ENCODE measurements at regions of chr1 and their contacts with region 1.

Region 1: GRCh38 chr1:234478481-234479309 is at the start of gene TARBP1:
- DNase-seq: peak; percentile 78
- ATAC-seq: peak; percentile 86
- H3K4me3 ChIP-seq: peak within 1 kb of the TSS; percentile 83
- H3K27ac ChIP-seq: peak within 1 kb of the TSS; percentile 62; the same call in 1 of the 2 replicates
- H3K4me1 ChIP-seq: peaks cover 8% of the 10 kb centered on the region
- H3K27me3 ChIP-seq: 0 out of 2 replicates have a peak, but pooled peaks cover 2% of the 10 kb centered on the region
- CTCF ChIP-seq: peak; percentile 36; the same call in 1 of the 2 replicates
- POLR2A ChIP-seq: 0 out of 2 replicates have a peak, but pooled peaks have one; percentile 26
- RAD21 ChIP-seq: peak; percentile 31
- total RNA-seq, gene TARBP1: 10.6 and 12.8 TPM in 2 replicates

Region 2: DNA sequence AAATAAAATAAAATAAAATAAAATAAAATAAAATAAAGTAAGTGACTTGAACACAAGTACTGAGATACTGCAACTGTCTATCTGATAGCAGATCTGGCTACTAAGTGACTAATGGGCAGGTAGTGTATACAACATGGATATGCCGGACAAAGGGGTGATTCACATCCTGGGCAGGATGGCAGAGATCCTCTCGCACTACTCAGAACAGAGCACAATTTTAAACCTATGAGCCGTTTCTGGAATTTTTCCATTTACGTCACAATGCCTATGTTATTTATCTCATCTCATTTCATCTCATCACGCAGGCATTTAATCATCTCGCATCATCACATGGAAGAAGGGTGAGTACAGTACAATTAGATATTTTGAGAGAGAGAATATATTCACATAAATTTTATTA is 338.7 kb before region 1 on chr1:
- CTCF ChIA-PET with region 1: no interaction called
- POLR2A ChIA-PET with region 1: no interaction called
- dilution Hi-C with region 1: no loop called
- in situ Hi-C with region 1: no loop called
- intact Hi-C with region 1: no loop called
- DNase-seq: peak; percentile 92
- ATAC-seq: peak; percentile 86
- H3K4me3 ChIP-seq: no peak overlapping the region
- H3K27ac ChIP-seq: no peak overlapping the region
- H3K4me1 ChIP-seq: no peaks in the 10 kb centered on the region; the same call in 1 of the 2 replicates
- H3K27me3 ChIP-seq: no peaks in the 10 kb centered on the region
- CTCF ChIP-seq: no peak
- POLR2A ChIP-seq: no peak
- RAD21 ChIP-seq: no peak

Region 3: DNA sequence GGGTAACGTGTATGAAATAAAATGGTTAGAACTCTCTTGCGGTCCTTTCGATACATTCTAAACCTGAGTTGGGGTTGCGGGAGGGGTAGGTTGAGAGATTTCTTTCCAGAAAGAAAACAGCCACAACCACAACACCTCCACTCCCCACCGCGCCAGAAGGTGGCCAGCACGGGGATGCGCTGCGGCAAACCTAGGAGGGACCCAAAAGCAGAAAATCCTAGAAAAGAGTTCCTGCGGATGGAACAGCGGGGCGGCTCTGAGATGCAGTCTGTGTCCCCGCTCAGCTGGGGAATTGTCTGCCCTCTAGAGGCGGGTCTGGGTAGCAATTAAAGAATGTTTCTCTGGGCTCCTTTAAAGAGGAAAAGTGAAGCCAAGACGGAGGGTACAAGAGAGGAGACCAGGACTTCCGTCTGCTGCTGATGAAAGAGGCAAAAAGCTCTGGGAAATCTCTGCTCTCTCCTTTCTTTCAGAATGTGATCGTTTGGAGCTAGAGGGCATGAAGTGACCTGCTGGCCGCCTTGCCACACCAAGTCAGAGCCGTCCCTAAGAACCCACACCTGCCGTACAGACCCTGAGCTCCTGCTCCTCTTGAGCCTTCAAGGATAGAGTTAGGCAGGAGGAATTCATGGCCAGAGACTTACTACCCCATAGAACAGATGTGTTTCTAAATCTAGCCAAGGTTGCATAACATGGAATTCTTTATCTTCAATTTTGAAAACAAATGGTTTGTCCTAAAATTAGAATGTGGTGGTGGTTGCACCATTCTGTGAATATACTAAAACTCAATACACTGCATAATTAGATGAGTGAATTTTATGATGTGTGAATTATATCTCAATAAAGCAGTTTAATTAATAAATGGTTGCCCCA is 152.0 kb before region 1 on chr1:
- CTCF ChIA-PET with region 1: no interaction called
- POLR2A ChIA-PET with region 1: no interaction called
- dilution Hi-C with region 1: no loop called
- in situ Hi-C with region 1: no loop called
- intact Hi-C with region 1: loop called (anchors 5 kb)
- DNase-seq: peak; percentile 43
- ATAC-seq: peak; percentile 92
- H3K4me3 ChIP-seq: peak overlapping the region; percentile 40; the same call in 1 of the 2 replicates
- H3K27ac ChIP-seq: no peak overlapping the region
- H3K4me1 ChIP-seq: peaks cover 3% of the 10 kb centered on the region
- H3K27me3 ChIP-seq: peaks cover 4% of the 10 kb centered on the region
- CTCF ChIP-seq: peak; percentile 72
- POLR2A ChIP-seq: no peak
- RAD21 ChIP-seq: peak; percentile 59

Region 4: DNA sequence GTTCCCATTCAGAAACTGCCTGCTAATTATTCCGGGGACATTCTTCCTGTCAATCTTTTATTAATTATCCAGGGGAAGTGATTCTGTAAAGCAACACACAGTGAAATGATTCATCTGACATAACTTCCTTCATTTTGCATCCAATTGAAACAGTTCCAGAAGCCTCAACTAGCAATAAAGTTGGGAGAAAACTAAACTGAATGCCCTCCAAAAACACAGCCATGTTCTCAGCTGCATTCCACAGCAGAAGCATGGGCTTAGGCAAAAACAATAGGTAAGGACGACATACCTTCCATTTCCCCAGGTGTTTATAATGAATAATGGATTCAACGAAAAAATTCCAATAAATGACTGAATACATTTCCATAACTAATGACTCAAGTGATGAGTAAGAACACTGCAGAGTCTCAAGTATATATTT is 37.1 kb after region 1 on chr1:
- CTCF ChIA-PET with region 1: no interaction called
- POLR2A ChIA-PET with region 1: interaction called, 12 read pairs
- dilution Hi-C with region 1: no loop called
- in situ Hi-C with region 1: no loop called
- intact Hi-C with region 1: no loop called
- DNase-seq: peak; percentile 61
- ATAC-seq: peak; percentile 44; the same call in 1 of the 2 replicates
- H3K4me3 ChIP-seq: no peak overlapping the region
- H3K27ac ChIP-seq: peak overlapping the region; percentile 26; the same call in 1 of the 2 replicates
- H3K4me1 ChIP-seq: peaks cover 9% of the 10 kb centered on the region
- H3K27me3 ChIP-seq: no peaks in the 10 kb centered on the region
- CTCF ChIP-seq: no peak
- POLR2A ChIP-seq: no peak
- RAD21 ChIP-seq: no peak

Region 5: DNA sequence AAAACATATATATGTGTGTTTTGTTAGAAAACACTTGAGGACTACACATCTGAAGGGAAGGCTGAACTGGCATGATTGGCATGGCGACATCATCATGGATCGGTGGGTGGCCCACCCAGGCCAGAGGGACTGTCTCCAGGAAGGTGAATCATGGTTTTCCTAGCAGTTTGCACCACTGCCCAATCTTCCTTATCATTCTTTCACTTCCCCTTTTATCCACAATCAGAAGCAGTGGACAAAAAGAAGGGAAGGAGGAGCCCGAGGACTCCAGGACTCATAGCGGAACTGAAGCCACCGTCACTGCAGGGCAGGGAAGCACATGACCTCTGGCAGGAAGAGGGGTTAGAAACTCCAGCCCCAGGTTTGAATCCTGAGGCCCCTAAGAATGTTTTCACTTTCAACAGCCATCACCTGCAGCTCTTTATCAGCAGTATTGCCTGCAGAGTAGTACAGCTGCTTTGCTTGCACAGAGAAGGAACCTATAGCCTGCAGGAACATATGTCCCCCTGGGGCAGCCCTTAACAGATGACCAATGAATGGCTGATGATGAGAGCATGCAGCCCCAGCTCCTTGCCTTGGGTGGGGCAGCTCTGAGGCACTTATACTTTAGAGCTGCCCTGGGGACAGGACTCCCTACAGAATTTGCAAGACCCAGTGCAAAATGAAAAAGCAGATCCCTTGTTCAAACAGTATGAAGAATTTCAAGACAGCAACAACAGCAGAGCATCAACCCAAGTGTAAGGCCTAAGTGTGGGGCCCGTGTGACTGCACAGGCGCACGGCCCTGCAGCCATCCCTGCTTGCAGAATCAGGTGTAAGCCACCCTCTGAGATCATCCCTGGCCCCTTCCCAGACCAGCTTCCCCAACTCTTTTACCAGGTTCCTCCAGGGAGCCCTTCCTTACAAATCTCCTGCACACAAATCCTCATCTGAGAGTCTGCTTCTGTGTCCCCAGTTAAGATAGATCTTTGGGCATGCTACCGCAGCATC is 373.0 kb after region 1 on chr1:
- CTCF ChIA-PET with region 1: no interaction called
- POLR2A ChIA-PET with region 1: no interaction called
- dilution Hi-C with region 1: no loop called
- in situ Hi-C with region 1: loop called (anchors 25 kb)
- intact Hi-C with region 1: no loop called
- DNase-seq: peak; percentile 55
- ATAC-seq: no peak
- H3K4me3 ChIP-seq: no peak overlapping the region
- H3K27ac ChIP-seq: no peak overlapping the region
- H3K4me1 ChIP-seq: peaks cover 11% of the 10 kb centered on the region
- H3K27me3 ChIP-seq: no peaks in the 10 kb centered on the region
- CTCF ChIP-seq: no peak
- POLR2A ChIP-seq: no peak
- RAD21 ChIP-seq: 0 out of 2 replicates have a peak, but pooled peaks have one; percentile 1

Region 6: GRCh38 chr1:235632506-235633401 is 1154.1 kb after region 1 on chr1:
- CTCF ChIA-PET with region 1: no interaction called
- POLR2A ChIA-PET with region 1: no interaction called
- dilution Hi-C with region 1: no loop called
- in situ Hi-C with region 1: no loop called
- intact Hi-C with region 1: loop called (anchors 10 kb)
- DNase-seq: peak; percentile 56
- ATAC-seq: peak; percentile 62
- H3K4me3 ChIP-seq: peak overlapping the region; percentile 49
- H3K27ac ChIP-seq: no peak overlapping the region
- H3K4me1 ChIP-seq: peaks cover 9% of the 10 kb centered on the region
- H3K27me3 ChIP-seq: 0 out of 2 replicates have a peak, but pooled peaks cover 4% of the 10 kb centered on the region
- CTCF ChIP-seq: no peak
- POLR2A ChIP-seq: no peak
- RAD21 ChIP-seq: no peak